ENCODE measurements at regions of chr2 and their contacts with region 1.

Region 1: GRCh38 chr2:100767810-100768806 is 51.8 kb upstream of the NPAS2 start:
- DNase-seq: no peak
- H3K4me3 ChIP-seq: no peak overlapping the region
- H3K27ac ChIP-seq: no peak overlapping the region
- H3K4me1 ChIP-seq: no peaks in the 10 kb centered on the region
- H3K27me3 ChIP-seq: no peaks in the 10 kb centered on the region
- CTCF ChIP-seq: no peak
- EP300 ChIP-seq: no peak
- POLR2A ChIP-seq: no peak

Region 2: GRCh38 chr2:99079226-99079625 is 1688.9 kb before region 1 on chr2:
- intact Hi-C with region 1: no loop called
- DNase-seq: no peak
- H3K4me3 ChIP-seq: no peak overlapping the region
- H3K27ac ChIP-seq: no peak overlapping the region
- H3K4me1 ChIP-seq: no peaks in the 10 kb centered on the region
- H3K27me3 ChIP-seq: no peaks in the 10 kb centered on the region
- CTCF ChIP-seq: no peak
- EP300 ChIP-seq: no peak
- POLR2A ChIP-seq: no peak

Region 3: GRCh38 chr2:100726866-100727265 is 41.2 kb before region 1 on chr2:
- intact Hi-C with region 1: loop called in 1 of 4 experiments (anchors 2 kb)
- DNase-seq: no peak
- H3K4me3 ChIP-seq: no peak overlapping the region
- H3K27ac ChIP-seq: no peak overlapping the region
- H3K4me1 ChIP-seq: no peaks in the 10 kb centered on the region
- H3K27me3 ChIP-seq: no peaks in the 10 kb centered on the region
- CTCF ChIP-seq: no peak
- EP300 ChIP-seq: no peak
- POLR2A ChIP-seq: no peak